Dendritic cell treated with granulocyte-macrophage colony-stimulating factor and Interleukin-4, amounts not matched to agents 40 ng/mL and 50 ng/mL, for 4 days (primary cell): ENCODE measurements at regions of chr3 and their contacts with region 1.

Region 1: DNA sequence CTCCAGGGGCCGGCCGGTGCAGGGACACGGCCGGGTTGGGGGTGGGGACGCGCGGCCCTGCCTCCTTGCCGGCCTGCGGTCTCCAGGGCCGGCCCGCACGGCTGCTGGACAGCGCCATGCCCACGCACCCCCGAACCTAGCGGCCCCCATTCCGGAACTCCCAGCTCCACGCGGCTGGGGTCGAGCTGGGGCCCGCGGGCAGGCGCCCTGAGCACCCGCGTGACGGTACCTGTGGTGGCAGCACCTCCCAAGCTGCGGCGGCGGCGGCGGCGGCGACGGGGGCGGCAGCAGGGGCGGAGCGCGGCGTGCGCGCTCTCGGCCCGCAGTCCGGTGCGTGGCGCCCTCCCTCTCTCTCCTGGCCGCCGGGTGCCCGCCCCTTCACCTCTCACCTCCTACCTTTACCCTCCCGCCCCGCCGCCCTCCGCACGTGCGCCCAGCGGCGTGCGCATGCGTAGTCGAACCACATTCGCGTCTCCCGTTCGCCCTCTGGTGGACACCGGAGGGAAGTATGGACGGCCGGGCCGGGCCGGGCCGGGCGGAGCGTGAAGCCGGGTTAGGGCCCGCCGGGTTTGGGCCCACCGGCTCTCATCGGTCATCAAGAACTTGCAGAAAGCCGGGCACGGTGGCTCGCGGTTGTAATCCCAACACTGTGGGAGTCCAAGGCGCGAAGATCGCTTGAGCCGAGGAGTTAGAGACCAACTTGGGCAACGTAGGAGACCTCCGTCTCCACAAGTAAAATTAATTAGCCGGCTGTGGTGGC is at the start of gene SCAP:
- H3K4me3 Mint-ChIP-seq: peak within 1 kb of the TSS; percentile 93
- H3K27ac Mint-ChIP-seq: peak within 1 kb of the TSS; percentile 68
- H3K4me1 Mint-ChIP-seq: peaks cover 23% of the 10 kb centered on the region
- H3K27me3 Mint-ChIP-seq: no peaks in the 10 kb centered on the region

Region 2: DNA sequence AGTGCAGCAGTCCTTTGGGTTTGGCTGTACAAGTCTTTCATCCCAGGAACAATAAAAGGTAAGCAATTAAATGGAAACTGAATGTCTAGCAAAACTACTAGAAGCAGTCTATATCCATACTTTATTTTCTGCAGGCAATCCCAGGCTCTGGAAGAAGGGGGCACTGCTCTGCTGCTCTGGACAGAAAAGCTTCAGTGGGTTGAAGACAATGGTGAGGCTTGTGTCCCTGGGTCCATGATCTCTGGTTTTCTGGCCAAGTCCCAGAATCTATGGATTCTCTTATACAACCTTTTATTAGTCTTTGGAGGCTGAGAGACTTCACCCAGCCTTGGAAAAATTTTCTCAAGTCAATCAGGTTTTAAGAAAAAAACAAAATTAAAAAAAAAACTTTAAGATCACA is 35.6 kb before region 1 on chr3:
- intact Hi-C with region 1: loop called (anchors 1 kb)
- H3K4me3 Mint-ChIP-seq: no peak overlapping the region
- H3K27ac Mint-ChIP-seq: no peak overlapping the region
- H3K4me1 Mint-ChIP-seq: peaks cover 18% of the 10 kb centered on the region
- H3K27me3 Mint-ChIP-seq: no peaks in the 10 kb centered on the region

Region 3: GRCh38 chr3:48088749-48089466 is 613.2 kb after region 1 on chr3:
- intact Hi-C with region 1: no loop called
- H3K4me3 Mint-ChIP-seq: peak overlapping the region; percentile 94
- H3K27ac Mint-ChIP-seq: peak overlapping the region; percentile 92
- H3K4me1 Mint-ChIP-seq: peaks cover 30% of the 10 kb centered on the region
- H3K27me3 Mint-ChIP-seq: no peaks in the 10 kb centered on the region